ENCODE measurements at regions of chr13 and their contacts with region 1.

Region 1: DNA sequence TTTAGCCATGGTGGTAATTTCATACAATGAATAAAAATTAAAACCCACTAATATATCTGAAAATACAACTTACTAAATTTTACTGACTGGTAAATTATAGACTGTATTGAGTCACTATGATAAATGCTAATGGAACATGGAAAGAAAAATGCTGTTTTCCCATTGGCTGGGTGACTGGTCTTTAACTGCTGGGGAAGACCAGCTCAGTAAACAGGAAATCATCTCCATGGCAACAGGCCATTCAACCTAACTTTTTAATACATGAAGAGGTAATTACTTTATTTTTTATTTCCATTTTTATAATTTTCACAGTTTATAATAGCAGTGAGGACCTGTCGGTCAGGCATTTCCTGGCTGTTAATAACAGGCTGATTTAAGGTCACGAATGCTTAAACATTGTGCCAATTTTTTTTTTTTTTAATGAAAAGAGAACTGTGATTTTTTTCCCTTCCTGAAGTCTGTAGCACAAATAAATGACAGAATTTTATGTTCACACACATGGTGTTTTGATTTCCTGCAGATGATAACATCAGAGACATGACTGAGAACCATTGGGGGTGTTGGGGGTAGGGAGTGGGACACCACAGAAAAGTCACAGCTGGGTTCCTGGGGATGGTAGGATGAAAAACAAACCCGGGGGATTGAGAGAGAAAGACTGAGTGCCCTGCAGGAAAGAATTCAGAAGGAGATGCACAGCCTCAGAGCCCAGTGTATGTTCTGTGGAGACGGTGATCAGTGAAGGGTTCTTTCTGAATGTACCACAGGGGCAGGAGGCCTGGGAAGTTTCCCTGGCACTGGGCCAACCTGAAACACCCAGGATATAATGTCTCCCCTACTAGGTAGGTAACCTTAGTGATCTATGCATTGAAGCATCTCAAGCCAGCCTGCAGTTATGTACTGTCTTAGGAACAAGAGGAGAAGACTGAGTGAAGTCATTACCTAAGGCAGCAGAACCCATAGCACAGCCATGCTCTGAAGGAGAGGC is 297.1 kb downstream of the COG6 start:
- DNase-seq: no peak
- ATAC-seq: no peak
- H3K4me3 ChIP-seq: no peak overlapping the region
- H3K27ac ChIP-seq: no peak overlapping the region
- H3K4me1 ChIP-seq: no peaks in the 10 kb centered on the region
- H3K27me3 ChIP-seq: no peaks in the 10 kb centered on the region
- CTCF ChIP-seq: no peak

Region 2: DNA sequence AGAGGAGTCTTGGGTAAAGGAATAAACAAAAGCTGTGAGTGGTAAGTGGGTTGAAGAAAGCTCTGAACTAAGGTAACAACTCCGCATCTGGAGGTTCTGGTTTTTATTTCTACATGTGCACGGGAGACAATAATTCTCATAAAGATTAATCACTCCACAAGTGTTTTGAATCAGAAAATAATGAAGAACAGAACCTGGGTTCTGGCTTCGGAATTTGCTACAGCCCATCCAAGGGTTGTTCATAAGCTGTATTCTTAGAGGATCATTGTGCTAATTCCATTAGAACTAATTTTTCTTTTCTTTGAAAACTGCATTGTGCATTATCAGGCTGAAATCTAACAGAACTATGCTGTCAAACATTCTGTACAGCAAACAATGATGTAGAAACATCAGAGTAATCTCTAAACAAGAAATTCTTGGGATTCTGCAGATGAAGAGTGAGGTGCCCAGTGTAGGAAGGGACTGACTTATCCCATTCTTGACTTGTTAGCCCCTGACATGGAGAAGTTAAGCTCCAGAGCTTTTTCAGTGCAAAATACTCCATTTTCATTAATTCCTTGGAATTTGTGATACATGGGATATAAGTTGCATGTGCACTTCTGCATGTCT is 71.2 kb after region 1 on chr13:
- CTCF ChIA-PET with region 1: no interaction called
- POLR2A ChIA-PET with region 1: no interaction called
- in situ Hi-C with region 1: no loop called
- intact Hi-C with region 1: loop called (anchors 2 kb)
- DNase-seq: no peak
- ATAC-seq: no peak
- H3K4me3 ChIP-seq: no peak overlapping the region
- H3K27ac ChIP-seq: no peak overlapping the region
- H3K4me1 ChIP-seq: no peaks in the 10 kb centered on the region
- H3K27me3 ChIP-seq: no peaks in the 10 kb centered on the region
- CTCF ChIP-seq: no peak

Measured in Panc1 (cell line).